Activated CD4-positive, alpha-beta T cell treated with anti-CD3 and anti-CD28 coated beads for 36 hours (primary cell): ENCODE measurements at regions of chr6 and their contacts with region 1.

Region 1: DNA sequence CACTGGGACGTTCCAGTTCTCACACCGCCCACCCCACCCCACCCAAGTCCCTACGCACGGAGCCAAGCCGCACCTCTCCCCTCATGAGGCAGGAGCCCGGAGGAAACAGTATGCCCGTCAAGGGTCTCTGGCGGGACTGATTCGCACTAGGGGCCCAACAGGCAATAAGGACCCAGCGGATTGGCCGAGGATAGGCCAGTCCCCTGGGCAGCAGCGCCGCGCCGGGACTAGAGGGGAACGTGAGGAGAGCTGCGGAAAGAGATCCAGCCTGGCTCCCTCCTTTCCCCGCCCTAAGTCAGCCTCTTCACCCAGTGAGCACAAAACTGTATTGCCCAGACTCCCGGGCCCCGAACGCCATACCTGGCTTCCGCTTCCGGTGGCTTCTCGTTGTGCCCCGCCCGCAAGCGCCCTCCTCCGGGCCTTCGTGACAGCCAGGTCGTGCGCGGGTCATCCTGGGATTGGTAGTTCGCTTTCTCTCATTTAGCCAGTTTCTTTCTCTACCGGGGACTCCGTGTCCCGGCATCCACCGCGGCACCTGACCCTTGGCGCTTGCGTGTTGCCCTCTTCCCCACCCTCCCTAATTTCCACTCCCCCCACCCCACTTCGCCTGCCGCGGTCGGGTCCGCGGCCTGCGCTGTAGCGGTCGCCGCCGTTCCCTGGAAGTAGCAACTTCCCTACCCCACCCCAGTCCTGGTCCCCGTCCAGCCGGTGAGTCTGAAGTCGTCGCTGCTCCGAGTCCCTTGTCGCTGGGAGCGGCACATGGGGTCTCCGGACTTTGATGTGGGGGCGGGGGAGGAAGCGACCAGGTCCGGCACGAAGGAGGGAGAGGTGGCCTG is at the start of gene CSNK2B:
- DNase-seq: peak; percentile 99
- ATAC-seq: peak; percentile 89
- H3K4me3 Mint-ChIP-seq: peak within 1 kb of the TSS; percentile 99
- H3K27ac Mint-ChIP-seq: peak within 1 kb of the TSS; percentile 99
- H3K4me1 Mint-ChIP-seq: peaks cover 66% of the 10 kb centered on the region
- H3K27me3 Mint-ChIP-seq: no peaks in the 10 kb centered on the region
- total RNA-seq, gene CSNK2B: 239 to 346 TPM

Region 2: GRCh38 chr6:31403283-31403989 is 262.3 kb before region 1 on chr6 and contains the start of gene MICA:
- CTCF ChIA-PET with region 1: no interaction called
- POLR2A ChIA-PET with region 1: no interaction called
- intact Hi-C with region 1: loop called in 1 of 2 experiments (anchors 5 kb)
- DNase-seq: peak; percentile 83
- ATAC-seq: peak; percentile 68
- H3K4me3 Mint-ChIP-seq: peak within 1 kb of the TSS; percentile 71
- H3K27ac Mint-ChIP-seq: peak within 1 kb of the TSS; percentile 71
- H3K4me1 Mint-ChIP-seq: peaks cover 62% of the 10 kb centered on the region
- H3K27me3 Mint-ChIP-seq: no peaks in the 10 kb centered on the region
- total RNA-seq, gene MICA: 6.3 to 7.1 TPM

Region 3: GRCh38 chr6:31546962-31547726 is 118.6 kb before region 1 on chr6 and contains the start of gene NFKBIL1:
- CTCF ChIA-PET with region 1: interaction called, 4 read pairs
- POLR2A ChIA-PET with region 1: interaction called, 6 read pairs
- intact Hi-C with region 1: loop called in 1 of 2 experiments (anchors 1 kb)
- DNase-seq: peak; percentile 95
- ATAC-seq: peak; percentile 77
- H3K4me3 Mint-ChIP-seq: peak within 1 kb of the TSS; percentile 89
- H3K27ac Mint-ChIP-seq: peak within 1 kb of the TSS; percentile 97
- H3K4me1 Mint-ChIP-seq: peaks cover 51% of the 10 kb centered on the region
- H3K27me3 Mint-ChIP-seq: no peaks in the 10 kb centered on the region
- total RNA-seq, gene NFKBIL1: 18.1 to 19.0 TPM

Region 4: DNA sequence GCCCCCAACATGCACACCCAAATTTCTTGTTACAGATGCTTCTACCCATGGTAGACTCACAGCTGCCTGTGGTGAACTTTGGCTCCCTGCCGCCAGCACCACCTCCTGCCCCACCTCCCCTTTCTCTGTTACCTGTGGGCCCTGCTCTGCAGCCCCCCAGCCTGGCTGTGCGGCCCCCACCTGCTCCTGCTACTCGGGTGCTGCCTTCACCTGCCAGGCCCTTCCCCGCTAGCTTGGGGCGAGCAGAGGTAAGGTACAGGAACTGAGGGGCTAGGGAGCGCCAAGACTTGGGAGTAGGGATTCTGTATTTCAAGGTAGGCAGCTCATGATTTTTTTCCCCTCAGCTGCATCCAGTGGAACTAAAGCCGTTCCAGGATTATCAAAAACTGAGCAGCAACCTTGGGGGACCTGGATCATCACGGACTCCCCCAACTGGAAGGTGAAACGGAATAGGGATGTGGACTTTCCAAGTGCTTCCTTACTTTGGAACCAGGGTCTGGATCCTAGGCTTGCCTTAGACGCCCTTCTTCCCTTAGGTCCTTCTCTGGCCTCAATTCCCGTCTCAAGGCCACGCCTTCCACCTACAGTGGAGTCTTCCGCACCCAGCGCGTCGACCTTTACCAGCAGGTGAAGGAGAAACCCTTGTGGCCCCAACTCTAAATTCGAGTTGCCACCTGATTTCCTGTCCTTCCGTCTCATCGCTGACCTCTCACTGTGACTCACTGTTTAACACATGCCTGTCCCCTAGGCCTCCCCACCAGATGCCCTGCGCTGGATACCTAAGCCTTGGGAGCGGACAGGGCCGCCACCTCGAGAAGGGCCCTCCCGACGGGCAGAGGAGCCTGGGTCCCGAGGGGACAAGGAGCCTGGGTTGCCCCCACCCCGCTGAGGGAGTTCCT is 28.8 kb before region 1 on chr6:
- CTCF ChIA-PET with region 1: no interaction called
- POLR2A ChIA-PET with region 1: no interaction called
- intact Hi-C with region 1: no loop called
- DNase-seq: no peak
- ATAC-seq: no peak
- H3K4me3 Mint-ChIP-seq: no peak overlapping the region
- H3K27ac Mint-ChIP-seq: peak overlapping the region; percentile 61
- H3K4me1 Mint-ChIP-seq: peaks cover 7% of the 10 kb centered on the region
- H3K27me3 Mint-ChIP-seq: no peaks in the 10 kb centered on the region

Region 5: DNA sequence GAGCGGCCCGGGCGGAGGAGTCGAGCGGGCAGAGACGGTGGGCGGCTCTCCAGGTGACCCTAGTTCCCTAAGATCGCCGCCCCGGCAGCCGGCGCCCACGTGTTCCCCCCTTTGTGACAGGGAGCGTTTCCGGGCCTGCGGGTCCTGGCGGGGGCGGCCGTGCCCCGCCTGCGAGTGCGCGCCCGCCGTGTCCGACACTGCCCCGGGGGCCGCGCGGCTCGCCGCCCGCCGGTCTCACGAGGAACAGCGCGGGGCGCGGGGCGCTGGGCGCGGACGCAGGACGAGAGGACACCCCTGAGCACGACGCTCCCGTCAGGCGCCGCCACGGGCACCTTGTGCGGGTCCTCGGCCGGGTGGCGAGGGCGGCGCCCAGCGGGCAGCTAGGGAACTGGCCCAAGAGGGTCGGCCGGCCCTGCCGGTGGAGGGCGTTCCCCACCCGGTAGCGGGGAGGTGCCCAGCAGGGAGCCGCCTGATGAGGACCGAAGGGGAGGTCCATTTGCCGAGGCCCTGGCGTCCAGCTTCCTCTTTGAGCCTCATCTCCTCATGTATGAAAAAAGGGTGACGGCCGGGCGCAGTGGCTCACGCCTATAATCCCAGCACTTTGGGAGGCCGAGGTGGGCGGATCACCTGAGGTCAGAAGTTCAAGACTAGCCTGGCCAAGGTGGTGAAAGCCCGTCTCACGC is 130.0 kb after region 1 on chr6 and contains the start of gene VARS1:
- CTCF ChIA-PET with region 1: interaction called, 4 read pairs
- POLR2A ChIA-PET with region 1: interaction called, 3 read pairs
- intact Hi-C with region 1: loop called in 1 of 2 experiments (anchors 1 kb)
- DNase-seq: peak; percentile 92
- ATAC-seq: peak; percentile 82
- H3K4me3 Mint-ChIP-seq: peak within 1 kb of the TSS; percentile 95
- H3K27ac Mint-ChIP-seq: peak within 1 kb of the TSS; percentile 95
- H3K4me1 Mint-ChIP-seq: peaks cover 47% of the 10 kb centered on the region
- H3K27me3 Mint-ChIP-seq: no peaks in the 10 kb centered on the region
- total RNA-seq, gene VARS1: 147 to 169 TPM

Region 6: GRCh38 chr6:31834434-31835198 is 168.9 kb after region 1 on chr6:
- CTCF ChIA-PET with region 1: interaction called, 4 read pairs
- POLR2A ChIA-PET with region 1: interaction called, 7 read pairs
- intact Hi-C with region 1: loop called in 1 of 2 experiments (anchors 1 kb)
- DNase-seq: peak; percentile 85
- ATAC-seq: peak; percentile 63
- H3K4me3 Mint-ChIP-seq: peak overlapping the region; percentile 90
- H3K27ac Mint-ChIP-seq: peak overlapping the region; percentile 95
- H3K4me1 Mint-ChIP-seq: peaks cover 40% of the 10 kb centered on the region
- H3K27me3 Mint-ChIP-seq: no peaks in the 10 kb centered on the region

Region 7: GRCh38 chr6:31958741-31959739 is 293.3 kb after region 1 on chr6 and contains the starts of genes NELFE and SKIC2:
- CTCF ChIA-PET with region 1: no interaction called
- POLR2A ChIA-PET with region 1: interaction called, 3 read pairs
- intact Hi-C with region 1: loop called in 1 of 2 experiments (anchors 1 kb)
- DNase-seq: peak; percentile 99
- ATAC-seq: peak; percentile 99
- H3K4me3 Mint-ChIP-seq: peak within 1 kb of the TSS; percentile 95
- H3K27ac Mint-ChIP-seq: peak within 1 kb of the TSS; percentile 98
- H3K4me1 Mint-ChIP-seq: peaks cover 34% of the 10 kb centered on the region
- H3K27me3 Mint-ChIP-seq: no peaks in the 10 kb centered on the region
- total RNA-seq, gene NELFE: 74.3 to 95.1 TPM
- total RNA-seq, gene SKIC2: 90.2 to 104 TPM

Region 8: DNA sequence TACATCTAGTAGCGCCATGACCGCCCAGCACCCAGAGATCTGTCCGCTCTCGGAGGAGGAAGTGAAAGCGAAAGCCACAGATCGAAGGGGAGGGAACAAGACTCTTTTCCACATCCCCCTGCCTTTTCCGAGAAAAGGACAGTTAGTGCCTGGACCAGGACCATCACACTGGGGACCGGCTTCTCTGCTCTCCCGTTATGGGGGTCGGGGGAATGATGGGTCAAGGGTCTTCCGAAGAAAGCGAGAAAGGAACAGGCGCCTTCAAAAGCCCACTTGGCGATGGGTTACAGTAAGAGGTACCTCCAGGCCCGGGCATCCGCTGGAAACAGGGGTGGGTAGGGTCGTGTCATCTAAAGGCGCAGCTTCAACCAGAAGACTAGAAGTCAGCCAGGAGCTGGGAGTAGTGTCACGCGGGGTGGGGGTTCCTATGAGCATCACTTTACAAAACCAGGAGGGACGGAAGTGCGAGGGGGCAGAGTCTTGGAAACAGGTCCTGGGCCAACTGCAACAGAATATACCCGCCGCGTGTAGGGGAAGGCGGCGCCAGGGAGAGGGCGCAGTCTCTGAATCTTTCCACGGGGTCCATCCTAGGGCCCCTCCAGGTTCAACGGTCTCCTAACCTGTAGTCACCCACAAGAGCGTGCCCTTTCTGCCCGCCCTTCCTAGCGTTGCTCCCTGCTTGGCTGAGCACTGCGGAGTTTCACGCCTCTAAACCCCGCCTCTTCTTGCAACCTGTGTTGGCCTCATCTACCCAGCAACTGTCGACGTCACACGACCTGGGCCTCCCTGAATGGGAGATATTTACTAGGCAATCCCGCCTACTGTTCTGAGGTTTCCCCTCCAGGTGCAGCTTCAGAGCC is 1178.5 kb after region 1 on chr6 and contains the start of gene PSMB8:
- CTCF ChIA-PET with region 1: no interaction called
- POLR2A ChIA-PET with region 1: no interaction called
- intact Hi-C with region 1: loop called in 1 of 2 experiments (anchors 5 kb)
- DNase-seq: peak; percentile 99
- ATAC-seq: peak; percentile 73
- H3K4me3 Mint-ChIP-seq: peak within 1 kb of the TSS; percentile 95
- H3K27ac Mint-ChIP-seq: peak within 1 kb of the TSS; percentile 97
- H3K4me1 Mint-ChIP-seq: peaks cover 66% of the 10 kb centered on the region
- H3K27me3 Mint-ChIP-seq: no peaks in the 10 kb centered on the region
- total RNA-seq, gene PSMB8: 238 to 338 TPM